ENCODE measurements at regions of chr2 and their contacts with region 1.

Region 1: DNA sequence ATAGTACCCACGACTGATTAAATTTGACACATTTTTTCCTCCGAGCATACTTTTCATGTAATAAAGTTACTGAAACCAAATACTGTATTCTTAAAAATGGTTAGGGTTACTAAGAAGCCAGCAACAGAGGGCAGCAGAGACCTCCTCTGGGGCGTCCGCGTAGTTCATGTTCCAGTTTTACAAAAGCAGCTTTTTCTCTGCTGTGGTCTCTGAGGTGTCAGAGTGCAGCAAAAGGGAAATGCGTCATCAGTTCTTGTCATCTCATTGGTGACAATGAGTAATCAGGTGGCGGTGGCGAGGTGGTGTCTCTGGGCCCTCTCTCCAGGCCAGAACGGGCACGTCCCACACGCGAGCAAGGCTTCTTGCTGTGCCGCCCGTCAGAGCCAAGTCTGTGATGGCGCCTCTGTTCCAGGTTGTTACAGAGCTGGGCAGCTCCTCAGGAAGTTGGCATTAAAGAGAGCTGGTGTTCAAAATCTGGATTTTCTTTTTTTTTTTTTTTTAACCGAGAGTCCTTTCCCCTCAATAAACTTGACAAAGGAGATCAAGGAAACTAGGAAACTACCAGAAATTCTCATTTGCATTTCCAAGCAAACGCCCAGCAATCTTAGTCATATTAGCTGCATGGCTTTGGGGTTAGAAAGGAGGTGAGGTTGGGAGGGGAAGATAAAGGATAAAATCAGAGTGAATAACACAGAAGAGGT is 98.6 kb upstream of the BZW1 start:
- DNase-seq: peak; percentile 66
- H3K4me3 ChIP-seq: peak overlapping the region; percentile 66
- H3K27ac ChIP-seq: peak overlapping the region; percentile 42
- H3K27me3 ChIP-seq: no peaks in the 10 kb centered on the region
- CTCF ChIP-seq: peak; percentile 90

Region 2: DNA sequence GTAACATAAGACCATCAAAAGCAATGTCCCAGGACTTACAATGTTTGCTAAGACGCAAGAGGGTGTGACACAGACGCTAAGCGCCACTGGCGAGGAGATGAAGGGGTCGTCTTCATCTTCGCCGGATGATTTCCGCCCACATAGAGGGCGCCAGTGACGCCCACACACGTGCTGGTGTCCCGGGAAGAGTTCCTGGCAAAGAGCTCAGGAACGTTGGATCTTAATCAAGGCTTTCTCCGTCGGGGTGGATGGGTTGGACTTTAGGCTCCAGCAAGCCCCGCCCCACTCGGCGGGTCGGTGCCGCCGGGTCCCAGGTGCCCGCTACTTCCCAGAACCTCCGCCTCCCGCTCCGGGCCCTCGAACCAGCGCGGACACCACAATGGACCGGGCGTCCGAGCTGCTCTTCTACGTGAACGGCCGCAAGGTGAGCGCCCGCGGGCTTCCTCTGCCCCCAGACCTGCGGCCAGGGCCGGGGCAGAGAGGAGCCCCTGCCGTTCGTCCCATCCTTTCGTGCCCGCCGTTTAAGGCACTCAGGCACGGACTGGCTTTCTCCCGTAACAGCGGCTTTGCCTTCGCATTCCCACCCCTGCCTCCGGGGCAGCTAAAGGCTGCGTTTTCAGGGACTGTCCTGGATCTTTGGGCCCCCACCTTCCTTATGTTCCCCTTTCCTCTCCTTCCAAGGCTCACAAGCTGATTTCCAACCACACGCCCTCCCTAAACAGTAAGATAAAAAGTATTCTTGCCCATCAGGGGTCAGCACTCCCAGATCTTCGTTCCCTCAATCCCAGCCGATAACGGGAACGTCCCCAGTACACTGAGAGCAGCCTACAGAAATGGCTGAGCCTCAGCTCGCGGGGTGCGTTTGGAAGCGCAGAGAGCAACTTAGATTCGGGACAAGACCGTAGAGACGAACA is 127.2 kb before region 1 on chr2 and contains the start of gene AOX1:
- CTCF ChIA-PET with region 1: interaction called, 13 read pairs
- POLR2A ChIA-PET with region 1: no interaction called
- DNase-seq: no peak
- H3K4me3 ChIP-seq: peak within 1 kb of the TSS; percentile 65
- H3K27ac ChIP-seq: peak within 1 kb of the TSS; percentile 13
- H3K27me3 ChIP-seq: no peaks in the 10 kb centered on the region
- CTCF ChIP-seq: peak; percentile 30
- polyA plus RNA-seq, gene AOX1: 5.6 and 7.9 TPM in 2 replicates

Region 3: GRCh38 chr2:200673191-200673590 is 40.0 kb before region 1 on chr2:
- CTCF ChIA-PET with region 1: no interaction called
- POLR2A ChIA-PET with region 1: no interaction called
- DNase-seq: no peak
- H3K4me3 ChIP-seq: no peak overlapping the region
- H3K27ac ChIP-seq: no peak overlapping the region
- H3K27me3 ChIP-seq: peaks cover 2% of the 10 kb centered on the region
- CTCF ChIP-seq: no peak

Region 4: GRCh38 chr2:200725596-200725995 is 12.4 kb after region 1 on chr2:
- CTCF ChIA-PET with region 1: interaction called, 21 read pairs
- POLR2A ChIA-PET with region 1: no interaction called
- DNase-seq: no peak
- H3K4me3 ChIP-seq: no peak overlapping the region
- H3K27ac ChIP-seq: no peak overlapping the region
- H3K27me3 ChIP-seq: peaks cover 44% of the 10 kb centered on the region
- CTCF ChIP-seq: no peak

Region 5: GRCh38 chr2:200735061-200735460 is 21.9 kb after region 1 on chr2:
- CTCF ChIA-PET with region 1: interaction called, 129 read pairs
- POLR2A ChIA-PET with region 1: interaction called, 5 read pairs
- DNase-seq: no peak
- H3K4me3 ChIP-seq: no peak overlapping the region
- H3K27ac ChIP-seq: no peak overlapping the region
- H3K27me3 ChIP-seq: peaks cover 18% of the 10 kb centered on the region
- CTCF ChIP-seq: no peak

Region 6: DNA sequence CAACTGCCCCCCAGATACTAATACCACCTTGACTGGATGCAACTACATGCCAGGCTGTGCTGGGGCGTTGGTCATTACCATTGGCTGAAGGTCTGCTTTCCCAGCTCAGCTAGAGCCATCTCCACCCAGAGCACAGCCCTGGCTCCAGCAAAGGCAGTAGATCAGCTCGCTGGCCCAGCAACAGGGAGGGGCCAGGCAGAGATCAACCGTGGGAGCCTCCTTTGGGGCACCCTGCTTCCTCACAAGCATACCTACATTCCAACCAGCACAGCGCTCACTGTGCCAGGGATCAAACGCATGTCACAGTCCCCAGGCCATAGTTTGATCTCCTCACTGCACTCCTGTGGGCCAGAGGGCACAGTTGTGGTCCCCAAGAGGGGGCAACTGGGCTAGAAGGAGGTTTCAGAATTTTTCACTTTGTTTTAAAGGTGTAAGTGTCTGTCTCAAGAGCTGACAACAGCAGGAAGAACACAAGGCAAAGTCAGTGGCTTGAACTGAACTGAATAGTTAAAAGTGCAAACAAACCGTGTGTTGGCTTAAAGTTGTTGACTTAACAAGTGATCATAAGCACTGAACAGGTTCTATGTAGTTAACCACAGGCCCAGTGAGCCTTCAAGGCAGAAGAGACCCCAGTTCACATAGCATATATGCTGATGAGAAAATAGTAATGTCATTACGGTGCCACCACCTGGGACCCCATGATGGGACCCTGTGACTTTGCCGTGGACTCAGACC is 28.5 kb after region 1 on chr2:
- CTCF ChIA-PET with region 1: interaction called, 129 read pairs
- POLR2A ChIA-PET with region 1: no interaction called
- DNase-seq: no peak
- H3K4me3 ChIP-seq: no peak overlapping the region
- H3K27ac ChIP-seq: no peak overlapping the region
- H3K27me3 ChIP-seq: peaks cover 4% of the 10 kb centered on the region
- CTCF ChIP-seq: no peak

Region 7: DNA sequence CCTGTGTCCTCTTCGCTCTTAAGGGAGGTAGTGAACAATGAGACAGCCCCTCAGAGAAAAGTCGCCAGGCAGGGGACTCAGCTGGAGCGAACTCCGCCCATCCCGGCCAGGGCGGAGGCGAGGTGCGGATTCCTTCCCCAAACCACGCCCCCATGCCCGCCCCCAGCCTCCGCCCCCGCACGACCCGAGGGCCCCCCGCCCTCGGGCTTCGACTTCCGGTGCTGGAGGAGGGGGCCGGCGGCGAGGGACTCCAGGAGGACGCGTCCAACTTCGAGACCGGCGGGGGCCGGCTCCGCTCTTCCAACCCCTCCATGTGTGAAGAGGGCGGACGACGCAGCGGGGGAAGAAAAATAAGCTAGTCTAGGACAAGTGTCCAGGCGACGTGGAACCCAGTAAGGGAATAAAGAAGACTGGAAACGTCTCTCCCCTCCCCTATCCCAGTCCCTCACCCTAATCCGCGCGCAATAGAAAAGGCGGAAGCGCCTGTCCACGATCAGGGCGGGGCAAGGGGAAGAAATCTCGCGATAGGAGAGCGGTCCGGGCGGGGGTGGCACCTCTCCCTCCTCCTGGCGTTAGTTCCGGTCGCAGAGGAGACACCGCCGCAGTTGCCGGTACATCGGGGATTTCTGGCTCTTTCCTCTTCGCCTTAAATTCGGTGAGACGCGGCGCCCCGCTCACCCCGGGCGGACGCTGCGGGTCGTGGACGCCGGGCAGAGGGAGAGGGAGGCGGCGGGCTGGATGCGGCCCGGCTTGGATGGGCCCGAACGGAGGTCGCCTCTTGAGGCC is 98.4 kb after region 1 on chr2 and contains the start of gene BZW1:
- CTCF ChIA-PET with region 1: interaction called, 35 read pairs
- POLR2A ChIA-PET with region 1: no interaction called
- DNase-seq: peak; percentile 93
- H3K4me3 ChIP-seq: peak within 1 kb of the TSS; percentile 92
- H3K27ac ChIP-seq: peak within 1 kb of the TSS; percentile 99
- H3K27me3 ChIP-seq: no peaks in the 10 kb centered on the region
- CTCF ChIP-seq: no peak
- polyA plus RNA-seq, gene BZW1: 359 and 376 TPM in 2 replicates

Region 8: GRCh38 chr2:201171259-201171814 is 458.2 kb after region 1 on chr2:
- CTCF ChIA-PET with region 1: no interaction called
- POLR2A ChIA-PET with region 1: no interaction called
- DNase-seq: no peak
- H3K4me3 ChIP-seq: no peak overlapping the region
- H3K27ac ChIP-seq: no peak overlapping the region
- H3K27me3 ChIP-seq: no peaks in the 10 kb centered on the region
- CTCF ChIP-seq: no peak